BJ (cell line): ENCODE measurements at regions of chr6 and their contacts with region 1.

Region 1: DNA sequence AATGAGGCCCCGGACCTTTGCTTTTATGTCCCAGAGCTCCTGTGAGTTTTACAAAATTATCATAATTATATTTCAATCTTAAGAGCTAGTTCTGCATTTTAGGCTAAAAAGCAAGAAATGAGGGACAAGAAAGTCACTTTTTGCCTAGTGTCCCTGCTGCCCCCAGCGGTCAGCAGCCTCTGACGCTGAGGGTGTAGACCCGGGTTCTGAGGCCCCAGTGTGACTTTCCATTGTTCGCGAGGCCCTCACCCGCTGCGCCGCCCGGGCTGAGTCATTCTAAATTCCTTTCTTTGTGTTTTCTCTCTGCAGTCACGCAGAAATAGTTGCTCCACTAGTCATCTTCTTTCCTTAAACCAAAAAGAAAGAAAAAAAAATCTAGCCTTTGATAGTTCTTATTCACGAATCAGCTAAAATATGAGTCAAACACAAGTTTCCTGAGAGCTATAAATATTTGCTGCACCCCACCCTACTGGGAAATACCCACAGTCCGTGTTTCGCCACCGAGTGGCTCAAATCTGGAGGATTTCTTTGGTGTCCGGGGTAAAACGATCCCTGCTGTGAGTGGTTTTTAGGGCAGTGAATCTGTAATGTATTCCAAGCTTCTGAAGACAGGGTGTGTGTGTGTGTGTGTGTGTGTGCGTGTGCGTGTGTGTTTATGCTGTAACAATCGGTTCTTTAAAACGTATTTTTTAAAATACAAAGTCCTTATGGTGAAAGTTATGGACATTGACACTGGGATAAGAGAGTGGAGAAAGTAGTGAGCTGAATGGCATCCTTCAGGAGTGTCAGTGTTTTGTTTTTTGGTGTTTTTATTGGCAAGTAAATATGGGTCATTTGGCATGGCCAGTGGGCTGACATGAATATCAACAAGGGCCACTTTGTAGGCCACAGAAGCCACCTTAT is 59.7 kb upstream of the EEF1A1 start:
- DNase-seq: peak; percentile 99
- H3K4me3 ChIP-seq: peak overlapping the region; percentile 23
- H3K27me3 ChIP-seq: no peaks in the 10 kb centered on the region
- CTCF ChIP-seq: peak; percentile 61

Region 2: GRCh38 chr6:72547020-72547419 is 1033.5 kb before region 1 on chr6:
- CTCF ChIA-PET with region 1: no interaction called
- POLR2A ChIA-PET with region 1: interaction called, 10 read pairs
- DNase-seq: no peak
- H3K4me3 ChIP-seq: no peak overlapping the region
- H3K27me3 ChIP-seq: no peaks in the 10 kb centered on the region
- CTCF ChIP-seq: no peak

Region 3: GRCh38 chr6:73566954-73567591 is 13.4 kb before region 1 on chr6:
- CTCF ChIA-PET with region 1: interaction called, 13 read pairs
- POLR2A ChIA-PET with region 1: interaction called, 11 read pairs
- DNase-seq: peak; percentile 9
- H3K4me3 ChIP-seq: no peak overlapping the region
- H3K27me3 ChIP-seq: no peaks in the 10 kb centered on the region
- CTCF ChIP-seq: no peak